Activated CD8-positive, alpha-beta T cell treated with anti-CD3 and anti-CD28 coated beads, Interleukin-2, amount 10 ng/mL, durations not matched to agents 7 days and 5 days (primary cell): ENCODE measurements at regions of chr9 and their contacts with region 1.

Region 1: GRCh38 chr9:36023260-36024048 is 13.3 kb upstream of the RECK start:
- DNase-seq: peak; percentile 79
- ATAC-seq: peak; percentile 88
- H3K4me3 Mint-ChIP-seq: no peak overlapping the region
- H3K27ac Mint-ChIP-seq: no peak overlapping the region
- H3K4me1 Mint-ChIP-seq: no peaks in the 10 kb centered on the region
- H3K27me3 Mint-ChIP-seq: peaks cover 6% of the 10 kb centered on the region

Region 2: DNA sequence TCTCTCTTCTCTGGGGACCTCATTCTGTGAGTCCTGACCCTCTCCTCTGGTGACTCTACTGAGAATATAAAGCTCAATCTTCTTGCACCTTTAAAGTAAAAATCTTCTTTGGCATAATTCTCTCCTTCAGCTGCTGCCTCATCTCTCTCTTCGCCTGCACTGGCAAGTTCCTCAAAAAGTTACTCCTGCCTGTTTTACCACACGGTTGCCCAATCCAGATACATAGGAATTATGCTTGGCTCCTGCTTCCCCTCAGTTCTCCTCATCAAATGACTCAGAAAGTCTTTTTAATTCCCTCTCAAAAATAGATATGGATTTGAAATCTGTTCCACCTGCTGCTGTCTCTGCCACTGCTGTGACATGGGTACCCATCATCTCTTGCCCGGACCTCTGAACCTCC is 131.8 kb before region 1 on chr9:
- CTCF ChIA-PET with region 1: no interaction called
- POLR2A ChIA-PET with region 1: no interaction called
- DNase-seq: no peak
- ATAC-seq: no peak
- H3K4me3 Mint-ChIP-seq: no peak overlapping the region
- H3K27ac Mint-ChIP-seq: no peak overlapping the region
- H3K4me1 Mint-ChIP-seq: no peaks in the 10 kb centered on the region
- H3K27me3 Mint-ChIP-seq: peaks cover 41% of the 10 kb centered on the region

Region 3: DNA sequence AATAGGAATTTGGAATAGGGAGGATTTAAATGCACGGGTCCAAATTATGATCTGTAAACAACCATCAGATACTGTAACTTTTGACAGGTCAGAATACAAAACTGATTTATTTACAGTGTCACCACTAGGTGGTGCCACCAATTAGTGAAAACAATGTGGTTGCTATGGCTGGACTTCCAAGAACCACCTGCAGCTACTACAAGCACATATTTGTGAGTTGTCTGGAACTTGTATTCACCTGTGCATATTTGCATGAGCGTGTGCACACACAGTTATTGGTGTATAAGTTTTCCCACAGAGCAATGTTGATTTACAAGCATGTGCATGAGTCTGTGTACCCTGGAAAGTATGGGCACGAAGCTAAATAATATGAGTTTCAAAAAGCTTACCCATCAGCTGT is 120.4 kb before region 1 on chr9:
- CTCF ChIA-PET with region 1: interaction called, 18 read pairs
- POLR2A ChIA-PET with region 1: no interaction called
- DNase-seq: peak; percentile 64
- ATAC-seq: peak; percentile 74
- H3K4me3 Mint-ChIP-seq: no peak overlapping the region
- H3K27ac Mint-ChIP-seq: no peak overlapping the region
- H3K4me1 Mint-ChIP-seq: peaks cover 10% of the 10 kb centered on the region
- H3K27me3 Mint-ChIP-seq: peaks cover 10% of the 10 kb centered on the region

Region 4: GRCh38 chr9:35954942-35955546 is 68.4 kb before region 1 on chr9:
- CTCF ChIA-PET with region 1: interaction called, 37 read pairs
- POLR2A ChIA-PET with region 1: no interaction called
- DNase-seq: peak; percentile 69
- ATAC-seq: peak; percentile 79
- H3K4me3 Mint-ChIP-seq: no peak overlapping the region
- H3K27ac Mint-ChIP-seq: no peak overlapping the region
- H3K4me1 Mint-ChIP-seq: no peaks in the 10 kb centered on the region
- H3K27me3 Mint-ChIP-seq: peaks cover 19% of the 10 kb centered on the region

Region 5: GRCh38 chr9:35996358-35996975 is 27.0 kb before region 1 on chr9:
- CTCF ChIA-PET with region 1: interaction called, 10 read pairs
- POLR2A ChIA-PET with region 1: no interaction called
- DNase-seq: no peak
- ATAC-seq: no peak
- H3K4me3 Mint-ChIP-seq: no peak overlapping the region
- H3K27ac Mint-ChIP-seq: no peak overlapping the region
- H3K4me1 Mint-ChIP-seq: no peaks in the 10 kb centered on the region
- H3K27me3 Mint-ChIP-seq: peaks cover 34% of the 10 kb centered on the region

Region 6: DNA sequence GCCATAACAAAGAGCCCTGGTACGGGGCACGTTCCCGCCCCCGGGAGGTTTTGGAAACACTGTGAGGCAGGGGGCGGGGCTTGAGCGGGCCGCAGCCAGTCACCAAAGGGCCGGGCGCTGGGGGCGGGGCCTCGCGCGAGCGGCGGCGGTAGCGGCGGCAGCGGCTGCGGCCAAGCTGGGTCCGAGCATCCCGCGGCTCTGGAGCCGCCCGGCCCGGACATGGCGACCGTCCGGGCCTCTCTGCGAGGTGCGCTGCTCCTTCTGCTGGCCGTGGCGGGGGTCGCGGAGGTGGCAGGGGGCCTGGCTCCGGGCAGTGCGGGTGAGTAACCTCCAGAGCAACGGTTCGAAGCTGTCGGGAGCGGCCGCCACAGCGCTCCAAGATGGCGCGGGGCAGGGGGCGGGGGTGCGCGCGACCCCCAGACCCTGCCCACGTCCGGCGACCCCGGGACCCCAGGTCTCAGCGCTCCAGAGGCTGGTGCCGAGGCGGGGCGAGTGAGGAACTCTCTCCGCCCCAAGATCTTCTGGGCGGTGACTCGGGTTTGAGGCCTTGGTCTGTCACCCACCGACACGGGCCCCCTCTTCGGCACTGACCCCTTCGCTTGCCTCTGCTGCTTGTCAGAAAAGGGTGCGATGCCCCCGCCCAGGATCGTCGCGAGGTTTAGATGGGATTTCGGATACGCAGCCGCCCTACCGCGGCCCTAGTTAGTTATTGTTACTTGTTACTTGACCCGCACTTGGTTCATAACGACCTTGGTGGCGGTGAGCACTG is 13.5 kb after region 1 on chr9 and contains the start of gene RECK:
- CTCF ChIA-PET with region 1: interaction called, 40 read pairs
- POLR2A ChIA-PET with region 1: interaction called, 3 read pairs
- DNase-seq: peak; percentile 88
- ATAC-seq: peak; percentile 93
- H3K4me3 Mint-ChIP-seq: peak within 1 kb of the TSS; percentile 87
- H3K27ac Mint-ChIP-seq: peak within 1 kb of the TSS; percentile 68
- H3K4me1 Mint-ChIP-seq: peaks cover 40% of the 10 kb centered on the region
- H3K27me3 Mint-ChIP-seq: peaks cover 20% of the 10 kb centered on the region
- total RNA-seq, gene RECK: 5.7 to 7.3 TPM